ENCODE measurements at regions of chr14 and their contacts with region 1.

Region 1: DNA sequence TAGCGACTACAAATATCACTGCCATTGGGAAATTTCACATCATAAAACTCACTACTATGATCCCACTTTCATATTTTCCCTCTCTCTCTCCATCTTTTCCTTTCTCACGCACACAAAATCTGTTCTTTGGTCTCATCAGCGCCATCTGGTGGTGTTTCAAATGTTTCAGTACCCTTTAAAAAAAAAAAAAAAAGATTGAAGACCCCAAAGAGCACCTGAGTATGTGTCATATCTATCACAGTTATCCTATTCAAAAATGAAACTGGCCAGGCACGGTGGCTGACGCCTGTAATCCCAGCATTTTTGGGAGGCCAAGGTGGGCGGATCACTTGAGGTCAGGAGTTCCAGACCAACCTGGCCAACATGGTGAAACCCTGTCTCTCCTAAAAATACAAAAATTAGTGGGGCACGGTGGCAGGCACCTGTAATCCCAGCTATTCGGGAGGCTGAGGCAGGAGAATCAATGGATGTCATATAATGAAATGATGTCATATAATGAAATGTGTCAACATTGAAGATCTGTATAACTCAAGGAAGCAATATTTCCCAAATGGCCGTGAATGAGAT is 72.4 kb downstream of the TTC9 start:
- DNase-seq: peak; percentile 22
- ATAC-seq: peak; percentile 47
- H3K4me3 Mint-ChIP-seq: peak overlapping the region; percentile 5
- H3K27ac Mint-ChIP-seq: peak overlapping the region; percentile 2
- H3K4me1 Mint-ChIP-seq: peaks cover 31% of the 10 kb centered on the region
- H3K27me3 Mint-ChIP-seq: no peaks in the 10 kb centered on the region
- CTCF ChIP-seq: peak; percentile 87

Region 2: DNA sequence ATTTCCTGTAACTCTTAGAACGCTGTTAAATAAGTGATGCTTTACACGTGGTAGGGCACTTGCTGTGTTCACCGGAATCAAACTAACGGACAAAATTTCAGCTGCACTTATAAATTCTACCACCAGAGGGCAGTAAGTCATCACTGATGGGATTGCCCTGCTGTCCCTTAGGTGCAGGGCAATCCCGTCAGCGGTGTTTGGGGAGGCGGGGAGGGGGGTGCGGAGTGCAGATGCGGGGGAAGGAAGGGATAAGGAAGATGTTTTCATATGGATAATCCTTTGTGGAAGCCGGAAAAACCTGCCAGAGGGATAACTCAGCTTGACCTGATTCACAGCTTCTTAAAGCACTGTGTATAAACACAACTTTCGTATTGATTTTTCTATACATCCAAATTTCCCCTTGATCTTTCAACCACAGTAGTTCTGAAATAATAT is 895.4 kb before region 1 on chr14:
- CTCF ChIA-PET with region 1: no interaction called
- POLR2A ChIA-PET with region 1: no interaction called
- intact Hi-C with region 1: loop called (anchors 2 kb)
- DNase-seq: peak; percentile 20
- ATAC-seq: peak; percentile 70
- H3K4me3 Mint-ChIP-seq: no peak overlapping the region
- H3K27ac Mint-ChIP-seq: no peak overlapping the region
- H3K4me1 Mint-ChIP-seq: peaks cover 4% of the 10 kb centered on the region
- H3K27me3 Mint-ChIP-seq: peaks cover 4% of the 10 kb centered on the region
- CTCF ChIP-seq: no peak

Region 3: DNA sequence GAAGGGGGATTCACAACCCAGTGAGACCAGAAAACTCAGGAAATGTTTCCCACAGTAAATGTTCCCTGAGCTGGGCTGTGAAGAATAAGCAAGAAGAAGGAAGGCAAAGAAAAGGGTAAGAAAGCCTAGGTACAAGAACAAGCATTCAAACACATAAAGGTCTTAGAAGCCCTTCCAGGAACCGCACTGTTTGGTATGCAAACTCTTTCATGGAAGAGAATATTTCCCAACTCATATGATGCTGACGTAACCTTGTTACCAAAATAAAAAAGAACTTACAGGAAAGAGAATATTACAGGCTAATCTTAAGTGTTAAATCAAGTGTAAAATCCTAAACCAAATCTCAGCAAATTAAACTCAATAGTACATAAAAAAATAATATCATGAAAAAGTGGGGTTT is 137.2 kb before region 1 on chr14:
- CTCF ChIA-PET with region 1: no interaction called
- POLR2A ChIA-PET with region 1: no interaction called
- intact Hi-C with region 1: no loop called
- DNase-seq: no peak
- ATAC-seq: no peak
- H3K4me3 Mint-ChIP-seq: no peak overlapping the region
- H3K27ac Mint-ChIP-seq: no peak overlapping the region
- H3K4me1 Mint-ChIP-seq: no peaks in the 10 kb centered on the region
- H3K27me3 Mint-ChIP-seq: no peaks in the 10 kb centered on the region
- CTCF ChIP-seq: no peak

Region 4: DNA sequence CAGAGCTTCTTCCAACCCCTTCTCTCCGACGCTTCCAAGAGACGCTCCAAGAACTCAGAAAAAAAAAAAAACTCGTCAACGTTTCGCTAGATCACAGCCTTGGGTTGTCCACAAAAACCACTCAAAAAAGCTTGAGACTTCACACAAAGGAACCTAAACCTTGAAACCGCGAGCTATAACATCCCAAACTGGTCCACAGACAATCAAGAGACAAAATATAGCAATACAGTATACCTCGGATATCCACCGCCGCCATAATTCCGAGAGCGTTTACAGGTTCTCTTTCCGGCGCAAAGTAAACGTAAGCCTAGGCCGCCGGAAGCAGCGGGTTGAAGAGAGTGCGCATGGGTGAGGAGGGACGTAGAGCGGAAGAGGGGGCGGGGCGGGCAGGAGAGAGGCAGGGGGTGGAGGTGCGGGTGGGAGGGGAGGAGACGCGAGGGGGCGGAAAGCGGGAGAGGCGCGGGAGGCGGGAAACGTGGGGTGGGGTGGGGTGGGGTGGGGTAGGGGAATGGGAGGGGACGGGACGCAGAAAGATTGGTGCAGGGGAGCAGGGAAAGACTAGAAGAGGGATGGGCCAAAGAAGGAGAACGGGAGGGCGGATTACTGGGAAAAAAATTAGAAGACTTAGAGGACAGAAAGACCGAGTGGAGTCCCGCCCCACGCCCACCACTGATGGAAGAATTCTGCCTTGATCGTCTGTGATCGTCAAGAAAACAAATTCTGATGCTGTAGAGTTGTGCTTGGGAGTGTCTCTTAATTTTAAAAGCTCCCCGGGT is 113.6 kb before region 1 on chr14 and contains the start of gene MED6:
- CTCF ChIA-PET with region 1: interaction called, 9 read pairs
- POLR2A ChIA-PET with region 1: interaction called, 6 read pairs
- intact Hi-C with region 1: loop called (anchors 1 kb)
- DNase-seq: peak; percentile 77
- ATAC-seq: peak; percentile 99
- H3K4me3 Mint-ChIP-seq: peak within 1 kb of the TSS; percentile 99
- H3K27ac Mint-ChIP-seq: peak within 1 kb of the TSS; percentile 94
- H3K4me1 Mint-ChIP-seq: peaks cover 43% of the 10 kb centered on the region
- H3K27me3 Mint-ChIP-seq: no peaks in the 10 kb centered on the region
- CTCF ChIP-seq: no peak
- total RNA-seq, gene MED6: 50.5 and 57.0 TPM in 2 replicates

Region 5: DNA sequence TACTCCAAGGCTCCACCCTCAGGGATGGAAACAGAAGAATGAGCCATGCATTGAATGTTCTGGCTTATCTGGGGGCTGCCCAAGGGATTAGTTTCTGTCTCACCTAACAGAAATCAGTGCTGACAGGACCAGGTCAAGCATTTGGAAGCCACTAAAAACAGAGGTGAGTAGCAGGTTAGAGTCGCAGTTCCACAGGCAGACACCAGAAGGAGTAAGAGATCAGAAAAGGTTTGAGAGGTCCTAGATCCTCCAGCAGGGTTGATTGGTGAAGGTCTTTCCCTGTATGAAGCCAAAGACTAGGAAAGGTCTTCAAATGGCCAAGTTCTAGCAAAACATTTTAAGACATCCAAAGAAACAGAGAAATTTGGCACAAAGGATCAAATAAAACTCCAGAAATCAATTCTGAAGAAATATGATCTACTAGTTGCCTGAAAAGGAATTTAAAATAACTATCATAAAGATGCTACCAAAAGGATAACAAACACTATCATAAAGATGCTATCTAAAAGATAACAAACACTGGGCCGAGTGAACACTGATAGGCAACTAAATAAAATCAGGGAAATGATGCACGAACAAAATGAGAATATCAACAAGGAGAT is 91.9 kb before region 1 on chr14:
- CTCF ChIA-PET with region 1: interaction called, 124 read pairs
- POLR2A ChIA-PET with region 1: interaction called, 7 read pairs
- intact Hi-C with region 1: loop called (anchors 1 kb)
- DNase-seq: no peak
- ATAC-seq: peak; percentile 95
- H3K4me3 Mint-ChIP-seq: no peak overlapping the region
- H3K27ac Mint-ChIP-seq: no peak overlapping the region
- H3K4me1 Mint-ChIP-seq: peaks cover 19% of the 10 kb centered on the region
- H3K27me3 Mint-ChIP-seq: no peaks in the 10 kb centered on the region
- CTCF ChIP-seq: peak; percentile 74

Region 6: DNA sequence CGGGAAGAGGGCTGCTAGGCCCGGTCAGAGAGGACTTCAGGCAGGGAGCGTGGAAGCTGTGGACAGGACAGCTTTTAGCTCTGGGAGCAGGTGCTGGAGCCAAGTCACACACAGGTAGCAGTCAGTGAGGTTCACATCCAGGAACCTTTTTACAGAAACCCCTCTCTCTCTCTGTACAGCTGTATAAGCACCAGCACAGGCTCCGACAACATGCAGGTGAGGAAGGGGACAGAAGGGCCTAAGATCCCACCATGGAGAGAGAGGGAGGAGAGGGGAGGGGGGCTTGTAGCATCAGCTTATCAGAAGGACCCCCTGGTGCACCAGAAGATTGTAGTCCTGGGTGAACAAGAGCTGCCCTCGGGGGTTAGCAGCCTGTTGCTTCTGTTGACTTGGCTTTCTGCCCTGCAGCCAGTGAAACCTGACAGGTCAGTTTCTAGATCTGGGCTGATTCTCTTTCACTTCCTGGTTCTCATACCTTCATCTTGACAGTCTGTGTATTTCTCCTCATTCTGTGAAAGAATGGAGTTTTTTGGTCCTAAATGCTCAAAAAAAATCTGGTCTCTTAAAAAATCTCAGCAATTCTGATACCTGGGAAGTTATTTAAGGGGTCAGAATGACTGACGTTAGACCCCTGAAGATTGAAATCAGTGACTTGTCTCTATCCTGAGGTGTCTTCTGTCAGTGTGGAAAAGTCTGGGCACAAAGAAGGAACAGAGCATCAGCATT is 48.8 kb before region 1 on chr14:
- CTCF ChIA-PET with region 1: interaction called, 10 read pairs
- POLR2A ChIA-PET with region 1: no interaction called
- intact Hi-C with region 1: loop called (anchors 1 kb)
- DNase-seq: peak; percentile 40
- ATAC-seq: peak; percentile 62
- H3K4me3 Mint-ChIP-seq: peak overlapping the region; percentile 66
- H3K27ac Mint-ChIP-seq: peak overlapping the region; percentile 93
- H3K4me1 Mint-ChIP-seq: peaks cover 97% of the 10 kb centered on the region
- H3K27me3 Mint-ChIP-seq: no peaks in the 10 kb centered on the region
- CTCF ChIP-seq: no peak

Region 7: DNA sequence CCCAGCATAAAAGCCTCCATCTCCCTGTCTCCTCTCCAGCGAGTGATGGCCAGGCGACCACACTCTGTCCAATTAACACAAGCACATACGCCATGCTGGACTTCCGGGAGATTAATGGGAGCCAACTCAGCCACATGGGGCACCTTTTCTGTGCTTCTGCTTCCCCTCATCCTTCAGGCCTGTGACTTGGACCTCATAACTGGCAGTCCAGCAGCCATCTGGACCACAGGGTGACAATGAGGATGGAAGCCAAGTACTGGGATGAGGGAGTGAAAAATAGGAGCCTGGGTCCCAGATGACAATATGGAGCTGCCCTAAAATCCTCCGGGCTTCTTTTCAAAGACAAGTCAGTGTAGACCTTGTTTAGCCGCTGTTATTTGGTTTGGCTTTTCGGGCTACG is 82.4 kb after region 1 on chr14:
- CTCF ChIA-PET with region 1: no interaction called
- POLR2A ChIA-PET with region 1: no interaction called
- intact Hi-C with region 1: no loop called
- DNase-seq: no peak
- ATAC-seq: no peak
- H3K4me3 Mint-ChIP-seq: no peak overlapping the region
- H3K27ac Mint-ChIP-seq: no peak overlapping the region
- H3K4me1 Mint-ChIP-seq: peaks cover 6% of the 10 kb centered on the region
- H3K27me3 Mint-ChIP-seq: no peaks in the 10 kb centered on the region
- CTCF ChIP-seq: no peak

Region 8: GRCh38 chr14:70821584-70822529 is 107.7 kb after region 1 on chr14:
- CTCF ChIA-PET with region 1: interaction called, 27 read pairs
- POLR2A ChIA-PET with region 1: no interaction called
- intact Hi-C with region 1: loop called (anchors 1 kb)
- DNase-seq: peak; percentile 36
- ATAC-seq: peak; percentile 25
- H3K4me3 Mint-ChIP-seq: peak overlapping the region; percentile 73
- H3K27ac Mint-ChIP-seq: no peak overlapping the region
- H3K4me1 Mint-ChIP-seq: peaks cover 19% of the 10 kb centered on the region
- H3K27me3 Mint-ChIP-seq: peaks cover 30% of the 10 kb centered on the region
- CTCF ChIP-seq: no peak